ENCODE measurements at regions of chr6 and their contacts with region 1.

Region 1: GRCh38 chr6:6556738-6557505 is 31.6 kb upstream of the LY86 start:
- DNase-seq: peak; percentile 73 to 81 (median 76)
- ATAC-seq: peak; percentile 97
- H3K4me3 ChIP-seq: no peak overlapping the region
- H3K27ac ChIP-seq: no peak overlapping the region
- H3K4me1 ChIP-seq: peaks cover 0 to 3% of the 10 kb centered on the region in 2 experiments; a peak in 1 of 5 replicates
- H3K27me3 ChIP-seq: peaks cover 5 to 34% of the 10 kb centered on the region in 2 experiments; a peak in 4 of 5 replicates
- CTCF ChIP-seq: peak; percentile 93 to 97 (median 95)
- EP300 ChIP-seq: peak; percentile 21; the same call in 1 of the 2 replicates
- POLR2A ChIP-seq: no peak
- RAD21 ChIP-seq: peak; percentile 90 to 92

Region 2: GRCh38 chr6:6646859-6647258 is 89.9 kb after region 1 on chr6:
- CTCF ChIA-PET with region 1: interaction called, 4 read pairs
- POLR2A ChIA-PET with region 1: no interaction called
- in situ Hi-C with region 1: no loop called
- intact Hi-C with region 1: loop called (anchors 5 kb)
- DNase-seq: peak; percentile 31 to 46 (median 40)
- ATAC-seq: peak; percentile 70
- H3K4me3 ChIP-seq: no peak overlapping the region
- H3K27ac ChIP-seq: no peak overlapping the region
- H3K4me1 ChIP-seq: no peaks in the 10 kb centered on the region; a peak in 2 of 5 replicates
- H3K27me3 ChIP-seq: peaks cover 11 to 20% of the 10 kb centered on the region in 2 experiments
- CTCF ChIP-seq: peak; percentile 36 to 60 (median 56); a peak in 5 of 6 replicates
- EP300 ChIP-seq: no peak
- POLR2A ChIP-seq: no peak
- RAD21 ChIP-seq: peak in 1 of 2 experiments; percentile 51; a peak in 3 of 4 replicates

Region 3: DNA sequence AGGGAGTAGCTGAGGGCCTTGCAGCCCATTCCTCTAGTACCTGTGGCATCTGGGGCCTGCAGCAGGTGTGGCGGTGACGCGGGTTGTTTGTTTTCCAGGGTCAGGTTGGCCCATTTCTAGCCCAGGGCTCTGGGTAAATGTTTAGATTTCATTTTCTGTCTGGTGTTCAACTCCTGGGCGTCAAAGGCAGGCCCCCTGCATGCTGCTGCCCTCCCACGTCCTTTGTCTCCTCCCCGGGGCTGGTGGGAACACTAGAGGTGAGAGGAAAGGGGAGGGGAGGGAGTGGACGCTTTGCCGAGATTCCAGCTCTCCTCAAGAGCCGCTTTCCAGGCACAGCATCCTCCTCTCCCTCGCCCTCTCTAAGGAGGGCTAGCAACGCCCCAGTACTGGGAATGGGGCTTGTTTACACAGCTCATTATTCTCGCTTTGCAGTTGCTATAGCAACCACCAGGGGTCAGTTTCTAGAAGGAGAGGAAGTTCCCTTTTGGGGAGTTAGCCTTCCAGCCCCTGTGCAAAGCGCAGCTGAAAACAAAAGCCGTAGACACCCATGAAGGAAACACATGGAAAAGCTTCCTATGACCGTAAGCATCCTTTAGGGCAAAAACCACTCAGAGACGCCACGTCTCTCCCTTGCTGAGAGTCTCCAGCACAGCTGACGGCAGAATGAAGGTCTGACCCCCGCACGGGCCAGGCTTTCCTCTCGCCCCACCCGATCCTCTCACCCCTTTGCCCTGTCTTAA is 202.2 kb after region 1 on chr6:
- CTCF ChIA-PET with region 1: no interaction called
- POLR2A ChIA-PET with region 1: no interaction called
- in situ Hi-C with region 1: no loop called
- intact Hi-C with region 1: loop called (anchors 10 kb)
- DNase-seq: peak; percentile 74 to 84 (median 78)
- ATAC-seq: peak; percentile 97
- H3K4me3 ChIP-seq: no peak overlapping the region
- H3K27ac ChIP-seq: no peak overlapping the region
- H3K4me1 ChIP-seq: peaks cover 4 to 9% of the 10 kb centered on the region in 2 experiments; a peak in 4 of 5 replicates
- H3K27me3 ChIP-seq: no peaks in the 10 kb centered on the region
- CTCF ChIP-seq: peak; percentile 68 to 86 (median 83)
- EP300 ChIP-seq: no peak
- POLR2A ChIP-seq: no peak
- RAD21 ChIP-seq: peak; percentile 76 to 86

Region 4: DNA sequence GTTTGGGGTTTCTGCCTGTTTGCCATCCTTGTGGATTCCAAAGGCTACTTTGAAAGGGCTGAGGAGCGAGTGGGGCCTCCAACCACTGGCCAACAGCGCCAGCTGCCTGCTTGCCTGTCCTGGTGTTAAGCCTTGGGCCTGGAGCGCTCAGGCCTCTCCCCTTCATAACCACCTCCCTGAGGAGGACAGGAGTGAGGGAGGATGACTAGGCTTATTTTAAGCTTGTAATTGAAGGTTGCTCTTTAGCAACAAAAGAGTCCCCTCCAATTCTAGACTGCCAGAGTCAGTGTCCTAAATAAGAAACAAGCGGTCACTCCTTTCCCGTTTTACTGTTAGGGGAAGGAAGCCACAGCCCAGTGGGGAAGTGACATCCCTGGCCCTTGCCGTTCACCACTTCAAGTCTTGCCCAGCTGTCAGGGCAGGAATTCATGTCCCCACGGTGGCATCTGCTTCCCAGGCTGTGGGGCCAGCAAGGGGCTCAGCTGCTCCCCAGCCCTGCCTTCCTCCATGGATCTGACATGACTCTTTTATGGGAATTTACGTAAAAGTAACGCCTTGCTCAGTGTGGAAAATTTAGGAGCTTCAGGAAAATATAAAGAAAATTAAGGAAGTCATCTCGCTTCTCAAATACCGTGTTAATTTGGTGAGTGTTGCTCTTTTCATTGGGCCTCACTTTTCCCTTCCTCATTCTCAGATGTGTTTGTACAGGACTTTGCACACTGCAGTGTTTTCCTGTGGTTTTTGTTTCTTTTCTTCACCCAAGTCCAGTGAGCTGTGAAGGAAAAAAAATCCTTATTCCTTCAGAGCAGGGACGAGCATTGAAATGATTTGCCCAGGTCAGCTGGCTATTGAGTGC is 698.3 kb after region 1 on chr6:
- CTCF ChIA-PET with region 1: no interaction called
- POLR2A ChIA-PET with region 1: no interaction called
- in situ Hi-C with region 1: no loop called
- intact Hi-C with region 1: loop called (anchors 5 kb)
- DNase-seq: peak in 3 of 4 experiments; percentile 41 to 73 (median 71)
- ATAC-seq: peak; percentile 90
- H3K4me3 ChIP-seq: no peak overlapping the region
- H3K27ac ChIP-seq: peak overlapping the region; percentile 38; the same call in 2 of the 3 replicates
- H3K4me1 ChIP-seq: peaks cover 21 to 25% of the 10 kb centered on the region in 2 experiments; a peak in 4 of 5 replicates
- H3K27me3 ChIP-seq: no peaks in the 10 kb centered on the region
- CTCF ChIP-seq: peak; percentile 49 to 55 (median 50)
- EP300 ChIP-seq: no peak
- POLR2A ChIP-seq: no peak
- RAD21 ChIP-seq: peak; percentile 46 to 88

Measured in K562 (cell line).